CD8-positive, alpha-beta T cell (primary cell): ENCODE measurements at regions of chr16 and their contacts with region 1.

Region 1: GRCh38 chr16:3690470-3690928 is 26.8 kb downstream of the TRAP1 start:
- DNase-seq: peak; percentile 69 to 90 (median 85)
- ATAC-seq: peak; percentile 100
- H3K4me3 ChIP-seq: no peak overlapping the region
- H3K4me3 Mint-ChIP-seq: peak overlapping the region; percentile 19
- H3K27ac ChIP-seq: no peak overlapping the region
- H3K27ac Mint-ChIP-seq: no peak overlapping the region
- H3K4me1 ChIP-seq: peaks cover 8% of the 10 kb centered on the region
- H3K4me1 Mint-ChIP-seq: peaks cover 7% of the 10 kb centered on the region
- H3K27me3 ChIP-seq: no peaks in the 10 kb centered on the region
- H3K27me3 Mint-ChIP-seq: no peaks in the 10 kb centered on the region
- CTCF ChIP-seq: peak; percentile 90

Region 2: GRCh38 chr16:3717235-3718018 is 26.9 kb after region 1 on chr16 and contains the start of gene TRAP1:
- CTCF ChIA-PET with region 1: interaction called, 6 read pairs
- POLR2A ChIA-PET with region 1: interaction called, 3 read pairs
- intact Hi-C with region 1: loop called in 1 of 2 experiments (anchors 1 kb)
- DNase-seq: peak; percentile 85 to 96 (median 91)
- ATAC-seq: peak; percentile 97
- H3K4me3 ChIP-seq: peak within 1 kb of the TSS; percentile 94 to 96
- H3K4me3 Mint-ChIP-seq: peak within 1 kb of the TSS; percentile 91
- H3K27ac ChIP-seq: peak within 1 kb of the TSS; percentile 84 to 88
- H3K27ac Mint-ChIP-seq: peak within 1 kb of the TSS; percentile 92
- H3K4me1 ChIP-seq: peaks cover 15% of the 10 kb centered on the region
- H3K4me1 Mint-ChIP-seq: peaks cover 38% of the 10 kb centered on the region
- H3K27me3 ChIP-seq: no peaks in the 10 kb centered on the region
- H3K27me3 Mint-ChIP-seq: no peaks in the 10 kb centered on the region
- CTCF ChIP-seq: no peak
- total RNA-seq, gene TRAP1: 48.3 to 57.4 TPM

Region 3: GRCh38 chr16:4957720-4958509 is 1267.4 kb after region 1 on chr16 and contains the start of gene SEC14L5:
- CTCF ChIA-PET with region 1: no interaction called
- POLR2A ChIA-PET with region 1: no interaction called
- intact Hi-C with region 1: loop called in 1 of 2 experiments (anchors 2 kb)
- DNase-seq: peak; percentile 72 to 92 (median 87)
- ATAC-seq: peak; percentile 98
- H3K4me3 ChIP-seq: peak within 1 kb of the TSS; percentile 40 to 70
- H3K4me3 Mint-ChIP-seq: peak within 1 kb of the TSS; percentile 82
- H3K27ac ChIP-seq: no peak within 1 kb of the TSS
- H3K27ac Mint-ChIP-seq: no peak within 1 kb of the TSS
- H3K4me1 ChIP-seq: peaks cover 15% of the 10 kb centered on the region
- H3K4me1 Mint-ChIP-seq: peaks cover 20% of the 10 kb centered on the region
- H3K27me3 ChIP-seq: peaks cover 6 to 22% of the 10 kb centered on the region in 2 experiments
- H3K27me3 Mint-ChIP-seq: peaks cover 55% of the 10 kb centered on the region
- CTCF ChIP-seq: no peak
- total RNA-seq, gene SEC14L5: not detected